ENCODE measurements at regions of chr6 and their contacts with region 1.

Region 1: GRCh38 chr6:36765594-36766398 is 68.2 kb downstream of the RAB44 start:
- DNase-seq: peak; percentile 61 to 95
- H3K4me3 ChIP-seq: no peak overlapping the region
- H3K27ac ChIP-seq: no peak overlapping the region
- H3K4me1 ChIP-seq: peaks cover 0 to 10% (median 1%) of the 10 kb centered on the region in 4 experiments; a peak in 4 of 7 replicates
- H3K27me3 ChIP-seq: no peaks in the 10 kb centered on the region
- CTCF ChIP-seq: peak; percentile 94 to 97 (median 96)
- EP300 ChIP-seq: no peak
- POLR2A ChIP-seq: no peak
- RAD21 ChIP-seq: peak; percentile 98 to 99

Region 2: DNA sequence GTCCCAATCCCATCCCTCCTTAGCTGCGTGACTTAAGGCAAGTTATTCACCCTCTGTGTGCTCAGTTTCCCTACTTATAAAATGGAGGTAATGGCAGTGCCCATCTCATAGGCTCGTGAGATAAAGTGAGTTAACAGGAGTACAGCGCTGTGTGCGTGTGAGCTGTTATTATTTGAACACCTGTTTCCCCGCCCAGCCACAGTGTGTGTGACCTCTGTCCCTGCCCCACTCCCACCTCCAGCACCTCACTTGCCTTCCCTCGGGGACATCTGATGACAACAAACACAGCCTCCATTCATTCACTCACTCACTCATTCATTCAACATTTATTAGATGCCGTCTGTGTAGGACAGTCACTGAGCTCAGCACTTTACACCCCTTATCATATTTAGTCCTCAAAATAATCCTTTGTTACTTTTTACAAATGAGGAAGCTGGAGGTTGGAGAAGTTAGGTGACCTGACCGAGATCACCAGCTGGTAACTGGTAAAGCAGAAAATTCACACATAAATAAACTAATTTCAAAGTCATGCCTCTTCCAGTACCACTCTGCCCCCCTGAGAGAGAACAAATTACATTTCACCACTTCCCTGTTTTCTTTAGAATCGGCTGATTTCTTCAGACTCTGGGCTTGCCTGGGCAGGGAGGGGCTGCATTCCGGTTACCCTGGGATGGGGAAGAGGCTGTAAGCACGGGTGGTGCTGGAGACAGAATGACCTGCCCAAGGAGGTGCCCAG is 14.8 kb after region 1 on chr6:
- CTCF ChIA-PET with region 1: interaction called, 231 read pairs
- POLR2A ChIA-PET with region 1: interaction called, 4 read pairs
- DNase-seq: no peak
- H3K4me3 ChIP-seq: no peak overlapping the region
- H3K27ac ChIP-seq: no peak overlapping the region
- H3K4me1 ChIP-seq: peaks cover 4 to 18% (median 14%) of the 10 kb centered on the region in 4 experiments
- H3K27me3 ChIP-seq: peaks cover 0 to 4% (median 0%) of the 10 kb centered on the region in 4 experiments; a peak in 3 of 7 replicates
- CTCF ChIP-seq: no peak
- EP300 ChIP-seq: no peak
- POLR2A ChIP-seq: no peak
- RAD21 ChIP-seq: no peak

Region 3: DNA sequence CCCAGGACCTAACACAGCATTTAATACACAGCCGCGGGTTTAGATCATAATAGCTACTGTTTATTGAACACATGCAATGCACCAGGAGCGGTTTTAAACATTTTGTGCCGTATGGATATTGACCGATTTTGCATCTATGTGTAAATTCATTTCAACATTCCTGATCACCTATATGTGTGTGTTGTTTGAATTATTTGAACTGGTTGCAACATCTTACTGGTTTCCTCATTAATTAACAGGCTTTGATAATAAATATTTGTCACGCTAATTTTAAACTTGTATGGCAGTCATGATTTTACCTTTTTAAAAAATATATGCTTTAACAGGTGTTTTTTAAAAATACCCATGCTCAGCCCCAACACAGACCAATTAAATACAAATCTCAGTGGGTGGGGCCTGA is 37.7 kb after region 1 on chr6:
- CTCF ChIA-PET with region 1: interaction called, 47 read pairs
- POLR2A ChIA-PET with region 1: no interaction called
- DNase-seq: no peak
- H3K4me3 ChIP-seq: no peak overlapping the region
- H3K27ac ChIP-seq: no peak overlapping the region
- H3K4me1 ChIP-seq: peaks cover 3 to 21% (median 4%) of the 10 kb centered on the region in 4 experiments; a peak in 4 of 7 replicates
- H3K27me3 ChIP-seq: no peaks in the 10 kb centered on the region; a peak in 2 of 7 replicates
- CTCF ChIP-seq: no peak
- EP300 ChIP-seq: no peak
- POLR2A ChIP-seq: no peak
- RAD21 ChIP-seq: no peak

Region 4: DNA sequence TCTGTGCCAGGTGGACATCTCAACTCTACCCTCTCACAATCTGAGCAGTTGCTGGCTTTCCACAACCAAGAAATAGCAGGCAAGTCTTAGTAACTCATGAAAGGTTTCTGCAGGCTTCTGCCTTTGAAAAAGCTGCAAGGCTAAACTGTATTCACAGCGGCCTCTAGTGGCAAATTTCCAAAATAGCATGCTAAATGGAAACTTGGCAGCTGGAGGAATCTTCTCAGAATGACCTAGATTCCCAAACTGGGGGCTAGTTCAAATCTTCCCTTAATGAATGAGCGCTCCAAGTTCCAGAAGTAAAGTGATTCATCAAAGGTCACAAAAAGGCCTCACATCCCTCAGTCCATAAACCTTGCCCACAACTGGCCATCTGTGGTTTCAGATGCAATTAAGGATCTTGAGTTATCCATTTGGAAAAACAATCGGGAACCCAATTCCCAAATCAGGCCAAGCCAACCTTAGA is 85.4 kb after region 1 on chr6:
- CTCF ChIA-PET with region 1: interaction called, 293 read pairs
- POLR2A ChIA-PET with region 1: interaction called, 5 read pairs
- DNase-seq: peak in 1 of 2 experiments; percentile 71
- H3K4me3 ChIP-seq: no peak overlapping the region
- H3K27ac ChIP-seq: no peak overlapping the region
- H3K4me1 ChIP-seq: peaks cover 7 to 17% (median 9%) of the 10 kb centered on the region in 4 experiments
- H3K27me3 ChIP-seq: peaks cover 0 to 9% (median 0%) of the 10 kb centered on the region in 4 experiments; a peak in 2 of 7 replicates
- CTCF ChIP-seq: peak in 2 of 3 experiments; percentile 75 to 85; a peak in 3 of 4 replicates
- EP300 ChIP-seq: no peak
- POLR2A ChIP-seq: no peak
- RAD21 ChIP-seq: peak; percentile 81 to 89

Region 5: DNA sequence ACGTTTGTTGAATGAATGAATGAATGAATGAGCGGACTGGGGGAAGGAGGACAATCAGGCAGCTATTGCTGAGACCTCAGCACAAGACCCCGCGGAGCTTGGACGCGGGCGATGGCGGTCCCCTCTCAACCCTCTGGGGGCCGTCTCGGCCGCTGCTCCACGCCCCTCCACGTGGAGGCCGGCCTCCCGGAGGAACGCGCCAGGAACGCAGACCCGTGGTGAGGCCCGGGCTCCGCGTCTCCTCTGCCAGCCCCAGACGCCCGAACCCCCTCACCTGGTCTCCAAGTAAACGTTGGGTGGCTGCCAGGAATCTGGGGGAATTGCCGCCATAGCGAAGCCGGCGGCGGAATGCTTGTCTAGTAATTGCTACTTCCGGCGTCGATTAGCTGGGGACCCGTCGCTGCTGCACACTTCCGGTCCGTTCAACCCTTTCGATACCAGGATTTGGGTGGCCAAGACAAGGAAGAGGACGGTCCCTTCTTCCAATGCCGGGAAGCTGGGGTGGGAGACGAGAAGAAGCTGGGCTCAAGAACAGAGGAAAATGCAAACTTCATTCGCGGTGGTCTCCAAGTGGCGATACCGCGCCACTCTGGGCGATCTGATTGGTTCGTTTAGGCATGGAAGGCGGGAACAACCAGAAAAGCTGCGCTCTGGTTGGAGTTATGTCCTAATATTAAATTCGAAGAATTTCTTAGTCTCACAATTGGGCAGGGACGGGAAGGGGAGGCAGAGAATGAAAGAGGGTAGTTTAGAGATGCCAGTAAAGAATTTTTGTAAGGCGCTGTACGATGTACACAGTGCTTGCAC is 108.8 kb after region 1 on chr6 and contains the start of gene PPIL1:
- CTCF ChIA-PET with region 1: interaction called, 39 read pairs
- POLR2A ChIA-PET with region 1: interaction called, 5 read pairs
- DNase-seq: peak in 1 of 2 experiments; percentile 82
- H3K4me3 ChIP-seq: peak within 1 kb of the TSS; percentile 83 to 91 (median 87)
- H3K27ac ChIP-seq: peak within 1 kb of the TSS; percentile 93
- H3K4me1 ChIP-seq: peaks cover 0 to 4% (median 1%) of the 10 kb centered on the region in 4 experiments; a peak in 3 of 7 replicates
- H3K27me3 ChIP-seq: no peaks in the 10 kb centered on the region
- CTCF ChIP-seq: no peak
- EP300 ChIP-seq: no peak
- POLR2A ChIP-seq: peak; percentile 77 to 81; a peak in 2 of 3 replicates
- RAD21 ChIP-seq: no peak
- total RNA-seq, gene PPIL1: 85.8 and 86.5 TPM in 2 replicates

Measured in H1 (cell line).